ENCODE measurements at regions of chr14 and their contacts with region 1.

Region 1: GRCh38 chr14:20707622-20708021 is 19.1 kb downstream of the ANG start:
- DNase-seq: peak; percentile 75
- H3K4me3 Mint-ChIP-seq: no peak overlapping the region
- H3K27ac Mint-ChIP-seq: no peak overlapping the region
- H3K4me1 Mint-ChIP-seq: peaks cover 8% of the 10 kb centered on the region
- H3K27me3 Mint-ChIP-seq: no peaks in the 10 kb centered on the region
- CTCF ChIP-seq: no peak

Region 2: GRCh38 chr14:20799892-20800544 is 92.4 kb after region 1 on chr14:
- CTCF ChIA-PET with region 1: interaction called, 4 read pairs
- intact Hi-C with region 1: loop called (anchors 5 kb)
- DNase-seq: peak; percentile 15
- H3K4me3 Mint-ChIP-seq: no peak overlapping the region
- H3K27ac Mint-ChIP-seq: no peak overlapping the region
- H3K4me1 Mint-ChIP-seq: peaks cover 37% of the 10 kb centered on the region
- H3K27me3 Mint-ChIP-seq: no peaks in the 10 kb centered on the region
- CTCF ChIP-seq: no peak

Region 3: DNA sequence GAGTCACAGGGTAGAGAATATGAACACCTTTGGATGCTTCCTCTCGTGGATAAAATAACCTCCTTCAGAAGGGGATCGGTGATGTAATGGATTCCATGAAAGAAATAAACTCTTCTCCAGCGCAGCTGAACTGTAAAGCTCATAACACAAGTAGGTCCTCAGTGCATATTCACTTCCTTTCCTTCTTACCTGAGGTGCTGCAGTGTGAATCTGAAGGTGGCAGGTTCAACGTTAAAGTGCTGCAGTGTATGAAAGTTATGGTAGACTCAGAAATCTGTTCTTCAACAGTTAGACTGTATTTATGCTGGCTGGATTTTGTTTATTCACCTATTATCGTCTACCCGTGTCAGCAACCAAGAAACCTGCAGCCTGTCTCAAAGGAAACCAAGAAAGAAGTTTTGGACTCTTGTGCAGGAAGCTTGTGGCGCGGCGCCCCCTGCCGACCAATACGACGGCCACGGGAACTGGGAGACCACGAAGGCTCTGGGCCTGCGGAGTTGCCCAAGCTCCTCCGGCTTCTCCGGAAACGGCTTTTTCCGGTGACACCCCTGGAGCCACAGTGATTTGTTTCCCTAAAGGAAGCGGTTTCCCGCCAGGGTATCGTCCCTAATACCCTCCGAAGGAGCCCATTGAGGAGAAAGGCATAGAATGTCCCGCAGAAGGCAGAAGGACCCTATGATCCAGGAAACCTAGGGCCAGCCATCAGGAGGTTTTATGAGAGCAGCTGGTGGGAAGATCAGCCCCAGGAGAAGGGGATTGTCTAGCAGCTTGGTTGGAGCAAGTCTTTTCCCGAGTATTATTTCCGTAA is 166.0 kb after region 1 on chr14:
- CTCF ChIA-PET with region 1: no interaction called
- intact Hi-C with region 1: no loop called
- DNase-seq: peak; percentile 67
- H3K4me3 Mint-ChIP-seq: no peak overlapping the region
- H3K27ac Mint-ChIP-seq: no peak overlapping the region
- H3K4me1 Mint-ChIP-seq: no peaks in the 10 kb centered on the region
- H3K27me3 Mint-ChIP-seq: peaks cover 65% of the 10 kb centered on the region
- CTCF ChIP-seq: peak; percentile 39